ENCODE measurements at regions of chr12 and their contacts with region 1.

Region 1: GRCh38 chr12:95473884-95474659 is at the start of gene METAP2:
- DNase-seq: peak; percentile 92
- ATAC-seq: peak; percentile 95
- H3K4me3 ChIP-seq: peak within 1 kb of the TSS; percentile 94 to 98
- H3K27ac ChIP-seq: peak within 1 kb of the TSS; percentile 77
- H3K4me1 ChIP-seq: peaks cover 9 to 33% of the 10 kb centered on the region in 2 experiments
- H3K27me3 ChIP-seq: no peaks in the 10 kb centered on the region
- CTCF ChIP-seq: no peak
- POLR2A ChIP-seq: peak; percentile 83
- RAD21 ChIP-seq: no peak
- total RNA-seq, gene METAP2: 127 TPM

Region 2: DNA sequence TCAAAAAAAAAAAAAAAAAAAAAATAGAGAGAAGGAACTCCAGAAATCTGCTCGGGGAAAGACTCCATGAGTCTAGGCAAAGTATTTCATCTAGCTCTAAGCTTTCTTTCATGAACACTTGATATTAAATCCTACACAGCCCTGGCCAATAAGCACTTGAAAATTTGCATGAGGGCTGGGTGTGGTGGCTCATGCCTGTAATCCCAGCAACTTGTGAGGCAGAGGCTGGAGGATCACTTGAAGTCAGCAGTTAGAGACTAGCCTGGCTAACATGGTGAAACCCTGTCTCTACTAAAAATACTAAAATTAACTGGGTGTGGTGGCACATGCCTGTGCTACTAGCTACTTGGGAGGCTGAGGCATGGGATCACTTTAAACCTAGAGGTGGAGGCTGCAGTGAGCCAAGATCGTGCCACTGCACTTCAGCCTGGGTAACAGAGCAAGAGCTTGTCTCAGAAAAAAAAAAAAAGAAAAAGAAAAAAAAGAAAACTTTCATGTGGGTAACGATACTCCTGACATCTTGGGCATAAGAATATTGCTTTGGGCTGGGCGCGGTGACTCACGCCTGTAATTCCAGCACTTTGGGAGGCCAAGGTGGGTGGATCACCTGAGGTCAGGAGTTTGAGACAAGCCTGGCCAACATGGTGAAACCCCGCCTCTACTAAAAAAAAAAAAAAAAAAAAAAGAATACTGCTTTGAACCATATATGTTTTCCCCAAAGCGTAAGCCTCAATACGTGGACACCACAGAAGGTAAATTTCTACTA is 13.0 kb before region 1 on chr12:
- CTCF ChIA-PET with region 1: no interaction called
- POLR2A ChIA-PET with region 1: interaction called, 11 read pairs
- RAD21 ChIA-PET with region 1: no interaction called
- intact Hi-C with region 1: no loop called
- DNase-seq: no peak
- ATAC-seq: peak; percentile 75
- H3K4me3 ChIP-seq: peak overlapping the region in 1 of 2 experiments; percentile 16; a peak in 1 of 4 replicates
- H3K27ac ChIP-seq: no peak overlapping the region
- H3K4me1 ChIP-seq: peaks cover 21 to 26% of the 10 kb centered on the region in 2 experiments; a peak in 3 of 4 replicates
- H3K27me3 ChIP-seq: no peaks in the 10 kb centered on the region
- CTCF ChIP-seq: no peak
- POLR2A ChIP-seq: no peak
- RAD21 ChIP-seq: no peak

Region 3: DNA sequence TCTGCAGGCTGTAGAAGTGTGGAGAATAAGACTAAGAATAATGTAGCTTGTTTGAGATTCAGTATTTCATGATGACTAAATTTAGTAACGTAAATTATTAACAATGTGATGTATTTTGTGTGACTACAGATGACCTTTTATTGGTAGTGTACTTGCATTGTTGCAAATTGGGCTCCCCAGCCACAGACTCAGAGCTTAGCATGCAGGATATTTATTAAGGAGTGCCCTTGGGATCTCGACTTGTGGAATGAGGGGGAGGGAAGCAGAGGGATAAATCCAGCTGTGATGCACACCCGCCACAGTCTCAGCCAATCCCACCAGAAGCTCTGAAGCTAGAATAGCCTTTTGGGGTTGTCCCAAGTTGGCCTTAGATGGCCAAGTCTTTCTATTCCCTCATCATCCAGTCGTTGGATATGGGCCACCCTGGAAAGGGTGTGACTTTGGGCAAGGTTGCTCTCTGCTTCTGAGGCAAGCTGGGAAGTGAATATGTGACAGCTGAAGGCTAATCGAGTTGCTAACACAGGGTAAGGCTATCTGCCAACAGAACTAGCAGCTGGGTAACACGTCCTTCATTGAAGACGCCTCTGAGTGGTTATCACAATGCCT is 119.3 kb after region 1 on chr12:
- CTCF ChIA-PET with region 1: no interaction called
- POLR2A ChIA-PET with region 1: no interaction called
- RAD21 ChIA-PET with region 1: no interaction called
- intact Hi-C with region 1: no loop called
- DNase-seq: no peak
- ATAC-seq: no peak
- H3K4me3 ChIP-seq: no peak overlapping the region
- H3K27ac ChIP-seq: no peak overlapping the region
- H3K4me1 ChIP-seq: no peaks in the 10 kb centered on the region
- H3K27me3 ChIP-seq: no peaks in the 10 kb centered on the region
- CTCF ChIP-seq: no peak
- POLR2A ChIP-seq: no peak
- RAD21 ChIP-seq: no peak

Region 4: DNA sequence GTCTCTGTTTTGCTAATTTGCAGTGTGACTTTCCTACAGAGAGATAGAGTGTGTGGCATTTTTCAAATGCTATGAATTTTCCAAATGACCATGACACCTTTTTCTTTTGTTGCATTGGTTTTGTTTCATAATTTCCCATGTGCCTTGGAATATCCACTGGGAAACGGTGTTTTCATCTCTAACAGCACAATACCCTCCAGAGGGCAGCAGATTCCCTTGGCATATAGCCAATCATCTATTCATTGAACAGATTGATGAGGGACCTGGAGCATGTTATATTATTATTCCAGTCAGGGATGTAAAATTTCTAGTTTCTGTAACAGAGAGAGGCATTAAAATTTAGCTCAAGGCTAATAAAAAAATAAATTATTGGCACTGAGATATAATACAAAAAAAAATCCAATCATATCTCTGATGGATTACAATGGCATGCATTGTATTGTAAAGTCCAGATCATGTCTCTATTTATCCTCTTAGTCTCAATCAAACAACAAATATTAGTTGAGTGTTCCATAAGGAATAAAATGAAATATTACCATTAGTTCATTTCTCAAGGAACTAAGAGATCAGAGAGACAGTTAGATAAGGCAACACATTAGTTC is 346.1 kb after region 1 on chr12:
- CTCF ChIA-PET with region 1: no interaction called
- POLR2A ChIA-PET with region 1: no interaction called
- RAD21 ChIA-PET with region 1: no interaction called
- intact Hi-C with region 1: no loop called
- DNase-seq: peak; percentile 41
- ATAC-seq: peak; percentile 72
- H3K4me3 ChIP-seq: no peak overlapping the region
- H3K27ac ChIP-seq: no peak overlapping the region
- H3K4me1 ChIP-seq: no peaks in the 10 kb centered on the region
- H3K27me3 ChIP-seq: no peaks in the 10 kb centered on the region
- CTCF ChIP-seq: peak; percentile 60 to 80 (median 72); a peak in 5 of 6 replicates
- POLR2A ChIP-seq: no peak
- RAD21 ChIP-seq: peak; percentile 67

Region 5: DNA sequence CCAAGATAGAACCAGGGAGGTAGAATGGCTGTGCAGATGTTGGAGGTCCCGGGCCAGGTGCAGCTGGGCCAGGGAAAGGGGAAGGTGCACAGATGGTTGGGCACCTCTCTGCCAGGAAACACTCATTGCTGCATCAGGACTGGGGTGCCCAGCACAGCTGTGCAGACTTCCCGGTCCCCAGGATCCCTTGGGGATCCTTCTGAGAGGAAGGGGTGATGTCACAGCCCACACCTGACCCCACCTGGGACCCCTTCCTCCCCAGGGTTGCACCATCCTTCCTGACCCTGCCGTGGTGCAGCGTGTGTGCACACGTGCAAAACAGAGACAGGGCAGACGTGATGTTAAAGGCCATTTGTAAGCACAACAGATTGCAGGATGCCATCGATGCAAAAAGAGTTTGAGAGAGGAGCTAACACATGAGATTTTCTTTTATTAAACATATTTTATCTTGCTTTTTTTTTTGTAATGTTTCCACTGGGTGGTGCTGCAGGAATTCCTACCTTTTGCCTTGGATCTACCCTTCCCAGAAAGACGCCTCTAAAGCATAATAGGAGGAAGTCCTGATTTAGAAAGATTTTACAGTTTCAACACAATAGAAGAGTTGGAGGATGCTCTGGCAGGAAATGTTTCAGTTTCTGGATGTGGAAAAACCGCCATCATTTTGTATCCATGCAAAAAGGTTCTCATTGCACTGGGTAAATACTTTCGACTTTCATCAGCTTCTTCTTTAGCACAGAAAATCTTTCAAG is 734.9 kb after region 1 on chr12:
- CTCF ChIA-PET with region 1: no interaction called
- POLR2A ChIA-PET with region 1: no interaction called
- RAD21 ChIA-PET with region 1: no interaction called
- intact Hi-C with region 1: no loop called
- DNase-seq: no peak
- ATAC-seq: no peak
- H3K4me3 ChIP-seq: no peak overlapping the region
- H3K27ac ChIP-seq: no peak overlapping the region
- H3K4me1 ChIP-seq: no peaks in the 10 kb centered on the region; a peak in 1 of 4 replicates
- H3K27me3 ChIP-seq: no peaks in the 10 kb centered on the region
- CTCF ChIP-seq: no peak
- POLR2A ChIP-seq: no peak
- RAD21 ChIP-seq: peak; percentile 34